Posterior cingulate gyrus (tissue), 11 donors: ENCODE measurements at regions of chr1 and their contacts with region 1.

Region 1: DNA sequence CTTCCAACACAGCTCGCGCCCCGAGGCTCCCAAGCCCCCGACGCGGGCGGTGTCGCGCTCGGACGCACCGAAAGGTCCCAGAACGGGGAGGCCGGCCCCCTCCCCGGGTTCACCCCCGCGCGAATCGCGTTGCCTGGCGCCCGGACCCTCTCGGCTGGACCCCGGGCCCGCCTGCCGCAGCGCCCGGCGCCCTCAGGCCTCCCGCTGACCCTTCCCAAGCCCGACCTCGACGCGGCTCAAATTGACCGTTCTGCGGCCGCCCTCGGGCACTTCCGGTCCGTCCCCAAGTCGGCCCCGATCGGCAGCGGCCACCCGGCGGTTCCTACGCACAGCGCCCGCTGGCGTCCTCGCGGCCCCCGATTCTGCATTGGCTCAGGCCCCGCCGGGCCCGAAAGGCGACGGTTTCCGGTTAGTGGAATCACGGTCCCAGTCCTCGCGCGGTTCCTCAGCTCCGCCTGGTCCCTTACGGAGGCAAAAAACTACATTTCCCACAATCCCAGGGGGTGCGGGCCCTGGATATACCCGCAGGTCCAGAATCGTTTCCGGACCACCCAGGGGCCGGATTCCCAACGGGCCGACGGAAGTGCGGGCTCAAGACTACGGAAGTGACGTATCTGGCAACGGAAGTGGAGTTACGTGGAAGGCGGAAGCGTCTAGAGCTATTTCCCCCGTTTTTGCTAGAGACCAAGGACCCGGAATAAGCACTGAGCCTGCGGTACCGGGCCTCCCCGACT is at the start of gene AURKAIP1:
- DNase-seq: peak; percentile 95 to 100 (median 98)

Region 2: DNA sequence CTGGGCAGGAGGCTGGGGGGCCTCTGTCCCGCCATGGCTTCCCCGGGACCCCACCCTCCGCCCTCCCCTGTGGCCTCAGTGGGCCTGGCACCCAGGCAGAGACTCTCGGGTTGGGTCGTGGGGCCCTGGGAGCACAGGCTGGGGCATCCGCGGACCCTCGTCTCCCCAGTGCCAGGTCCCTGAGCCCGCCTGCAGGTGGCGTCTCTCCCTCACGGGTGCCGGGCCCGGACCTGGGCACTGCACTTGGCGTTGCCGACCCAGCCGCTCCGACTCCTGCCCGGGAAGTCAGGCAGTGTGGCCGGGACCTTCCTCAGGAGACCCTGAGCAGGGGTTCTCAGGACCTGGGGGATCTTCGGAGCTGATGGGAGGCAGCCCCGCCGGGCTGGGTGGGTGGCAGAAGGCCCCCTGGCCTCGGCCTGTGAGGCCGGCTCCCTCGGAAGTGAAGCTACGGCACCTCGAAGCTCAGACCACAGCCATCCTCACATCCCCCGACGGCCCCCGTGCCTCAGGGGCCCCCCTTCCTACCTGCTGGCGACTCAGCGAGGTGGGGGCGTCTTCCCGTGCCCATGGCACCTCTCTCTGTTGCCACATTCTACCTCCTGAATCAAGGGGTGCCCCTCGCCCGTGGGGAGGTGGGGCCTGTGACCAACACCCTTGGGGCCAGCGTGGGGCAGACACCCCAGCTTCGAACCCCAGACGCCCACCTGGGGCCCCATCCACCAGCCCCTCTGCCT is 252.9 kb before region 1 on chr1:
- intact Hi-C with region 1: loop called (anchors 10 kb)
- DNase-seq: peak; percentile 66 to 97 (median 82)

Region 3: DNA sequence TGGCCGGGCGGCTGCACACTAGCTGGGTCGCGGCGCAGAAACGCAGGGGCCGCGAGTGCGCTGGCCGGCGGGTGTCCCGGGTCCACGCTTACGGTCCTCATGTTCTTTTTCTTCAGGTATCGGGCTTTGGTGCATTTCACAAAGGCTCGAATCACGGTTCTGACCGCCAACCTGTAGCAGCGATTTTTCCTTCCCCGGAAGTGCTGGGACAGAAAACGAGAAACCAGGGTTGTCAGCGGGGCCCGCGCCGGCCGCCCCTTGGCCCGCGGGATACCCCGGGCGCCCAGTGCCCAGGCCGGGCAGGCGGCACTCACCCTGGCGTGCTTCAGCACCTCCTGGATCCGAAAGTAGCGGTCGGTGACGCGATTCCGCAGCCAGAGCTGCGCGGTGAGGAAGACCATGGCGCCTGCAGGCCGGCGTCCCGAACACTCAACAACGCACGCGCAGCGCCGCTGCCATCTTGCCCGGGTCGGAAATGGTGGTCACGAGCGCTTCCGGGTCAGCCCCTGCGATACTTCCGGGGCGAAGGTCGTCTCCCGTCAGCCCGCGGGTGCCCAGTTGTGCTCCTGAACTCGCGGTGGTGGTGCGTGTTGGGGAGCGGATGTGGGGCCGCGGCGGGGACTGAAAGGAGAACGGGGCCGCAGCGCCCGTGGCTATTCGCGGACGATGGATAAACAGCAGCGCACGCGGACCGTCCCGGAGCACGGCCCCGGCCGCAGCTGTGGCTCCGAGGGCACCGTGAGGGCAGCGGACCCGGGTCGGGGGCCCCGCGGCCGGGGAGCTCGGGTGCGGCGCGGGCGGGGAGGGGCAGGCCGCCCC is 31.9 kb after region 1 on chr1 and contains the start of gene MRPL20:
- intact Hi-C with region 1: loop called (anchors 2 kb)
- DNase-seq: peak; percentile 91 to 99 (median 94)